Posterior cingulate gyrus (tissue), 11 donors: ENCODE measurements at regions of chr12 and their contacts with region 1.

Region 1: DNA sequence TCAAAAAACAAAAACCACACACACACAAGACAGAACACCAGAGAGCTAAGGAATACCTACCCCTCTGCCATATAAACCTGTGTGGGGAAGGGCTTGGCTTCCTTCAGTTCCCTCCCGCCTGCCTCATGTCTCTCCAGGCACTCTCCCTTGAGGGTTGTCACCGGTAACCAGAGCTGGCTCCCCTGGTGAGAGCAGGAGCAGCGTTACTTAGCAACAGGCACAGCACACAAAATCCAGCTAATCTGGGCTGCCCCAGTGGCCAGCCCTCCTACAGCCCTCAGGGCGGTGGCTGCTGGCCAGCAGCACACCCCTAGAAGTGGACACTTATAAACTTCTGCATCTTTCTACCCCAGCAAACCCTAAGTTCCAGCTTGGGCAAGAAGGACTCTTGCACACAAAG is 21.6 kb upstream of the NR4A1 start:
- DNase-seq: no peak

Region 2: DNA sequence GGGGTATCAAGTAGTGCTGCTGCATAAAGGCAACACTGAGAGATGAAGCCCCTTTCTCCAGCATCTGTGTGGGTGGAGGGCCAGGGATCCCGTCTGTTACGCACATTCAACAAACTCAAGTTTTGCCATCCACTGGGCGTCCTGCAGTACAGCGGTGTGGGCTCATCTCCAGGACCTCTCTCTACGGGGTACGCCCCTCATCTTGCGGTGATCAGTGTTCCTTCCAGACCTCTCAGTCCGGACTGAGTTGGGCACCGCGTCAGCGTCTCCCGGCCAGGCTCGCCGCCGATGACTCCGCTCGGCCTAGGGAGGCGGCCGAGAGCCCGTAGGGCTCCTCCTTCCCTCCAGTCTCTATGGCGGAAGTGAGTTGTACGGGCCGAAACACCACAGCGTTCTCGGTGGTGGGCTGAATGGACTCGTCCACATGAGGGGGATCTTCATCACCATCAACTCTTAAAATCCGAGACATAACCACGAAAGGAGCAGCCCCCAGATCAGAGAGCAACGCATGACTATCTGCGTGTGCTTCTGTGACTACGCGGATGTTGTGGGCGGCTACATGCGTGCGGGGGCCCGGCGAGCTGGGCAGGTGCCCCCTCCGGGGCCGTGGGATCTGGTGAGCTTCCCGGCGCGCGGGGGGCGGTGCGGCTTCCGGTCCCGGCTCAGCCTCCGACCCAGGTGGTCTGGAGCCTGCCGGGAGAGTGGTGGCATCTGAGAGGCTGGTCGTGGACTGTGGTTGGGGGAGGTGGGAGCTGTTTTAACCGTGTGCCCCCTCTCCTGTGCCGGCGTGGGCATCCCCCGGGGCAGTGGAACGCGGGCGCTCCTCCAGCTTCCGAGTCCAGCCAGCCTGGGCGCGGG is 39.9 kb after region 1 on chr12 and contains the start of gene ATG101:
- intact Hi-C with region 1: loop called (anchors 5 kb)
- DNase-seq: peak; percentile 83 to 99 (median 89)